ENCODE measurements at regions of chr15 and their contacts with region 1.

Region 1: GRCh38 chr15:72272213-72273002 is at the start of gene PARP6:
- DNase-seq: peak; percentile 96 to 100 (median 98)

Region 2: GRCh38 chr15:72199711-72200212 is 72.6 kb before region 1 on chr15:
- intact Hi-C with region 1: loop called (anchors 10 kb)
- DNase-seq: peak; percentile 43 to 95 (median 80)

Region 3: GRCh38 chr15:72222259-72222832 is 50.1 kb before region 1 on chr15:
- intact Hi-C with region 1: no loop called
- DNase-seq: peak in 8 of 10 donors; percentile 39 to 94 (median 68)

Region 4: GRCh38 chr15:72827226-72827625 is 554.8 kb after region 1 on chr15:
- intact Hi-C with region 1: no loop called
- DNase-seq: peak in 5 of 10 donors; percentile 15 to 72 (median 36)

Measured in posterior cingulate gyrus (tissue), 11 donors.